Activated B cell treated with CpG ODN at 0.5 μM for 24 hours (primary cell): ENCODE measurements at regions of chr14 and their contacts with region 1.

Region 1: DNA sequence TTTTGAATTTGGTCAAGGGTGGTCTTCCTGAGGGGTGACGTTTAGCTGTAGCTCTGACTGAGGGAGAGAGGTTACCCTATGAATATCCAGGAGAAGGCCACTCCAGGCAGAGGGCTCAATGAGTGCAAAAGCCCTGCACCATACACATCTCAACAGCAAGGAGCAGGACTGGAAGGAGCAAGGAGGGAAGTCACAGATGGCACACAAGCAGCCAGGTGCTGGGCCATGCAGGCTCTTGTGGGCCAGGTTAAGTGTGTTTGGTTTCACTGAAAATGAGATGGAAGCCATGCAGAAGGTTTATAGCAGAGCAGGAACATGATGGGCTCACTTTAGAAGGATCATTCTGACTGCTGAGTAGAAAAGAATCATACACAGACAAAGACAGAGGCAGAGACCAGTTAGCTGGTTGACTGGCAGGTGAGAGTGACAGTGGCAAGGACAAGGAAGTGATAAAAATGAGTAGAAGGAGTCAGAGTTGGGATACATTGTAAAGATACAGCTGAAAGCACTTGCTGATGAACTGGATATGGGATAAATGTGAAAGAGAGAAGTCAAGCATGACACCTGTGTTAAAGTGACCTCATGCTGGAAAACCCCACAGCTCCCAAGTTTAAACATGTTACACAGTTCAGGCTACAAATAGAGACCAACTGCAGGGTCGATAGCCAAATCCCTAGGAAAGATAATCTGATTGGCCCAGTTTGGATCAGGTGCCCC is 81.2 kb downstream of the PRKD1 start:
- DNase-seq: no peak
- ATAC-seq: peak; percentile 52
- H3K4me3 Mint-ChIP-seq: no peak overlapping the region
- H3K27ac Mint-ChIP-seq: peak overlapping the region; percentile 19
- H3K4me1 Mint-ChIP-seq: peaks cover 15% of the 10 kb centered on the region
- H3K27me3 Mint-ChIP-seq: no peaks in the 10 kb centered on the region
- CTCF ChIP-seq: no peak

Region 2: GRCh38 chr14:29858299-29858698 is 11.8 kb after region 1 on chr14:
- CTCF ChIA-PET with region 1: interaction called, 5 read pairs
- POLR2A ChIA-PET with region 1: interaction called, 19 read pairs
- intact Hi-C with region 1: loop called (anchors 1 kb)
- DNase-seq: no peak
- ATAC-seq: peak; percentile 80
- H3K4me3 Mint-ChIP-seq: peak overlapping the region; percentile 80
- H3K27ac Mint-ChIP-seq: peak overlapping the region; percentile 98
- H3K4me1 Mint-ChIP-seq: peaks cover 43% of the 10 kb centered on the region
- H3K27me3 Mint-ChIP-seq: no peaks in the 10 kb centered on the region
- CTCF ChIP-seq: no peak